CD8-positive, alpha-beta T cell (primary cell): ENCODE measurements at regions of chr11 and their contacts with region 1.

Region 1: DNA sequence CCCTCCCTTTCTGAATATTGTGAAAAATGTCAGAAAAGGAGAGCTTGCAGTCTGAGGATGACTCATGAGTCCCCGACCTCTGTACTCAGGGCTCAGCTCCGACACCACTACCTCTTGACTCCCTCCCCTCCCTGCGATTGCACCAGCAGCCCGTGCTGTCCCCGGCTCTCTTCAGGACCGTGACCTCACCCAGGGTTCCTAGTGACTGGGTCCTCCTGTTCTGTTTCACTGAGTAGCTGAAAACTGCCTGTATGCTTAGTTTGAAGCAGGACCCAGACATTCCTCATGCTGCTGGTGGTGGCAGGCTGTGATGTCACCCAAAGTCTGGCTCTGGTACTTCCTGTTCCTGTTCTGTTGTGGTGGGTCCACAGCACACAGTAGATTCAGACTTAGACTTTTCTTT is 11.7 kb downstream of the PHRF1 start:
- DNase-seq: peak; percentile 42 to 95 (median 81)
- ATAC-seq: peak; percentile 95
- H3K4me3 ChIP-seq: peak overlapping the region in 1 of 2 experiments; percentile 3
- H3K4me3 Mint-ChIP-seq: peak overlapping the region; percentile 69
- H3K27ac ChIP-seq: peak overlapping the region; percentile 60 to 76
- H3K27ac Mint-ChIP-seq: peak overlapping the region; percentile 99
- H3K4me1 ChIP-seq: peaks cover 20% of the 10 kb centered on the region
- H3K4me1 Mint-ChIP-seq: peaks cover 29% of the 10 kb centered on the region
- H3K27me3 ChIP-seq: no peaks in the 10 kb centered on the region
- H3K27me3 Mint-ChIP-seq: no peaks in the 10 kb centered on the region
- CTCF ChIP-seq: no peak

Region 2: DNA sequence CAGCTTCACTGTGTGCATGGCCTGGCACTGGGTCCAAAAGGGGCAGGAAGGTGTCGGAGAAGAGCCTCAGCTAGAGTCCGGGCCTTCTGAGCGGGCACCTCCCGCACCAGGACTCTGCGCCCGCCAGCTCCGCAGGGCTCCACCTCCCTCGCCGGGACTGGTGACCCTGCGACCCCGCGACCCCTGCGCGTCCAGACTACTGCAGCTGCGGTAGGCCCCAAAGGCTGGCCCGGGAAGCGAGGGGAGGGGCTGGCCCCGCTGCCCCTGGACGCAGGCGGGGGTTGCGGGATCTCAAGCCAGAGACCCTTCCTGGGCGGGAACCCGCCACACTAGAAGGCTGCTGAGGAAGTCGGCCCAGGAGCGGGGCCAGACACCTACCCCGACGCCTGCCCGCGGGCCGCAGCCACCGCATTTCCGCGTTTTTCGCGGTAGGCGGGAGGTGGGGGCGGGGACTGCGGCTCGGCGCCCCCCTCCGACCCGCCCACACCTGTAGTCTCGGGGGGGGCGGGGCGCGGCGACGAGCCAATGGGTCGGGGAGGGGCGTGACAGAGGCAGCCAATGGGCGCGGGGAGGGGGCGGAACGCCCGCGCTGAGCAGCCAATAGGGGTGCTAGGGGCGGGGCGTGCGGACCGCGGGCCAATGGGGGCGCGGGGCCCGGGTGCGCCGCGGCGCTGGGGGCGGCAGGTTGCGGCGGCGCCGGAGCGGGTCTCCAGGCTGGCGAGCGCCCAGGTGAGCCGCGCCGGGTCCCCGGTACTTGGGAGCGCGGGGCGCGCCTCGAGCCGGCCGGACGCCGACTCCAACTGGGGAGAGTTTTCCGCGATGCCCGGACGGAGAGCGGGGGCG is 27.5 kb before region 1 on chr11 and contains the starts of genes LMNTD2 and RASSF7:
- CTCF ChIA-PET with region 1: interaction called, 12 read pairs
- POLR2A ChIA-PET with region 1: no interaction called
- intact Hi-C with region 1: loop called in 1 of 2 experiments (anchors 1 kb)
- DNase-seq: peak; percentile 92 to 98 (median 95)
- ATAC-seq: peak; percentile 94
- H3K4me3 ChIP-seq: peak within 1 kb of the TSS; percentile 51 to 94
- H3K4me3 Mint-ChIP-seq: peak within 1 kb of the TSS; percentile 88
- H3K27ac ChIP-seq: peak within 1 kb of the TSS; percentile 51 to 76
- H3K27ac Mint-ChIP-seq: peak within 1 kb of the TSS; percentile 84
- H3K4me1 ChIP-seq: peaks cover 19% of the 10 kb centered on the region
- H3K4me1 Mint-ChIP-seq: peaks cover 18% of the 10 kb centered on the region
- H3K27me3 ChIP-seq: no peaks in the 10 kb centered on the region
- H3K27me3 Mint-ChIP-seq: no peaks in the 10 kb centered on the region
- CTCF ChIP-seq: no peak
- total RNA-seq, gene LMNTD2: 4.2 to 5.6 TPM
- total RNA-seq, gene RASSF7: 11.8 to 15.3 TPM

Region 3: DNA sequence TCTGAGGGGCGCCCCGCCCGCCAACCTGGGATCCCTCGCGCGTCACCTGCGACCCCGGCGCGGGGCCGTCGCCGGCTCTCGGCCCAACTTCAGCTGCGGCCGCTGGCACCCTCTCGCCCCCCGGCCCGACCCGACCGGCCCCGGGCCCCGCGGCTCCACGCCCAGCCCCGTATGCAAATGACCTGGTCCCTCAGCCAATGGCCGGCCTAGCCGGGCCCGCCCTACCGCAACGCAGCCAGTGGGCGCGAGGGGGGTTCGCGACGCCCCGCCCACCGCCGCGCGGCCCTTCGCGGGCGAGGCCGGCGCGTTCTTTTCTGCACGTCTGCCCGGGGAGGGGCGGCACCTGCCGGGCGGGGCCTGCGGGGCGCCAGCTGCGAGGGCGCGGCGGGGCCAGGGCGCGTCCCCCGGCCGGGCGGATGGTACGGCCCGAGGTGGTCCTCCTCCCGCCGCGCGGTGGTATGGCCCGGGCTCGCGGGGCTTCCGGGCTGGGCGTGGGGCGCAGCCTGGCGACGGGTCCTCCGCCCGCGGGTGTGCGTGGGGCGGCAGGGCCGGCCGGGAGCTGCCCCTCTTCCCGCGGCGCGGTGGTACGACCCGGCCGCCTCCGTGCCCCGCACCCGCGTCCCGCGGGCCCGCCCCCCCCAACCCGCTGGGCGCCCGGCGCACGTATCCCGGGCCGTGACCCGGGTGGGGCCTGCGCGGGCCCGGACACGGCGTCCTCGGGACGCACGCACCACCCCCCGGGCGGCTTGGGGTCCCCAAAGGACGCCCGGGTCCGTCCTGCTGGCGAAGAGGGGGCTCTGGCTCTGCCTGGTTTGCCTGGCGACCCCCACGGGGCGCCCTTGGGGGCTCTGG is 19.4 kb before region 1 on chr11:
- CTCF ChIA-PET with region 1: no interaction called
- POLR2A ChIA-PET with region 1: interaction called, 4 read pairs
- intact Hi-C with region 1: loop called in 1 of 2 experiments (anchors 1 kb)
- DNase-seq: peak; percentile 82 to 97 (median 92)
- ATAC-seq: peak; percentile 92
- H3K4me3 ChIP-seq: peak overlapping the region; percentile 64 to 71
- H3K4me3 Mint-ChIP-seq: peak overlapping the region; percentile 80
- H3K27ac ChIP-seq: peak overlapping the region; percentile 45 to 68
- H3K27ac Mint-ChIP-seq: peak overlapping the region; percentile 64
- H3K4me1 ChIP-seq: peaks cover 8% of the 10 kb centered on the region
- H3K4me1 Mint-ChIP-seq: peaks cover 11% of the 10 kb centered on the region
- H3K27me3 ChIP-seq: no peaks in the 10 kb centered on the region
- H3K27me3 Mint-ChIP-seq: no peaks in the 10 kb centered on the region
- CTCF ChIP-seq: no peak